ENCODE measurements at regions of chr22 and their contacts with region 1.

Region 1: GRCh38 chr22:32796865-32797573 is 4.5 kb upstream of the TIMP3 start:
- DNase-seq: no peak
- H3K4me3 ChIP-seq: no peak overlapping the region
- H3K27me3 ChIP-seq: no peaks in the 10 kb centered on the region
- CTCF ChIP-seq: peak; percentile 93

Region 2: GRCh38 chr22:32528984-32529982 is 267.7 kb before region 1 on chr22:
- CTCF ChIA-PET with region 1: interaction called, 266 read pairs
- POLR2A ChIA-PET with region 1: interaction called, 16 read pairs
- DNase-seq: no peak
- H3K4me3 ChIP-seq: no peak overlapping the region
- H3K27me3 ChIP-seq: no peaks in the 10 kb centered on the region
- CTCF ChIP-seq: peak; percentile 84

Region 3: DNA sequence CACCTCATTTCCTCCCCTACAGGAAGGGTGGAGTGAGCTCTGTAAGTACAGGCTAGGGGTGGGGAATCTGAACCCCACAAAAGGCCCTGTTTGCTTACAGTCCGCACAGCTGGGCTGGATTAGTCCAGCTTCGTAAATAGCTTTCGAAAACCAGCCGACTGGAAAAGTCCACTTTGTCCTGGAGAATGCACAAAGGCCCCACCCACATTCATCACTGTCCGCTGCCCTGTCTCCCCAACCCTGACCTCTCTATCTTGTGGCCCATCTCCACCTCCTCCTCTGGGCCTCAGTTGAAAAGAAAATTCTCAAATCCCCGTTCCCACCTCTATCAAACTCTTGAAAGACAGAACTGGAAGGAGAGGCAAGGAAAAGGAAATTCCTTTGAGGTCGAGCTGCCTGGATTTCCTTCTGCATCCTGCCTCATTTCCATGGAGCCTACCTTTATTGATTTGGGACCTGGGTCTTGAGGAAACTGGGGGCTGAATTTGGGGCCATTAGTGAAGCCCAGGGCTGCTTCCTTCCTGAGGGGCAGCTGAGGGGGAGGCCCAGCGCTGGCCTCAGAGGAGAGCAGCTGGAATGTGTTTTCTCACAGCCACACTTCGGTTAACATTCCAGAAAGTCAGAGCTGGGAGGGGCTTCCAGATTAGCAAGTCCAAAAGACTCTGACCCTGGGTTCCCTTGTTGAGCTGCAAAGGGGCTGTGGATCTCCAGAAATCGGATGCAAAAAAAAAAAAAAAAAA is 174.8 kb before region 1 on chr22:
- CTCF ChIA-PET with region 1: interaction called, 119 read pairs
- POLR2A ChIA-PET with region 1: interaction called, 15 read pairs
- DNase-seq: peak; percentile 81
- H3K4me3 ChIP-seq: peak overlapping the region; percentile 4; the same call in 1 of the 2 replicates
- H3K27me3 ChIP-seq: 0 out of 2 replicates have a peak, but pooled peaks cover 1% of the 10 kb centered on the region
- CTCF ChIP-seq: no peak

Region 4: GRCh38 chr22:32660292-32660691 is 136.7 kb before region 1 on chr22:
- CTCF ChIA-PET with region 1: interaction called, 224 read pairs
- POLR2A ChIA-PET with region 1: interaction called, 8 read pairs
- DNase-seq: no peak
- H3K4me3 ChIP-seq: no peak overlapping the region
- H3K27me3 ChIP-seq: no peaks in the 10 kb centered on the region
- CTCF ChIP-seq: peak; percentile 67

Region 5: DNA sequence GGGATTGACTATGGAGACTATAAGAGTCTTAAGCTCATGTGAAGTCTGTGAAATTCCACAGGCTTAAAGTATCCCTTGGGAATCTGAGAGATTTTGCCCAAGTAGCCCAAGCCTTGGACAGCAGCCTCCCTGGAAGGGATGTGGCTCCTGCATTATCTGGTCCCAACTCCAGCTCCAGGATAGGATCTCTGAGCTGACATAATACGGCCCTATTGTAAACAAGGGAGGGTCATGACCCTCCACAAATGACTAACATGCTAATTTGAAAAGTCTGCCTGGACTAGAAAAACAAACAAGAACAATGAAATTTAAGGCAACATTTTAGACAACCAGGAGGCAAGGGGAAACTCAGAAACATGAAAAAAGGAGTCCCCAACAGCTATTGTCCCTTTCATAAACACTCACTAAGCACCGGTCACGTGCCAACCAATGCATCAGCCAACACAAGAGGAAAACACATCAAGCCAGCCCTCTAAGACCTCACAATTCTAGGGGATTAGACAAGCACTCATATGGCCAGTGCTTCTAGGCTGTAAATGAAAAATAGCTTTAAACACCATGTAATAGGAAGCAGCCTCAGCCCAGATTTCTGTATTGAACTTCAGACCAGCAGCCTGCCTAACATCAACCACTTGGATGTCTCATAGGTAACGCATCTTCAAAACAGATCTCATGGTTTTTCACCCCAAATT is 96.7 kb before region 1 on chr22:
- CTCF ChIA-PET with region 1: interaction called, 15 read pairs
- POLR2A ChIA-PET with region 1: no interaction called
- DNase-seq: no peak
- H3K4me3 ChIP-seq: no peak overlapping the region
- H3K27me3 ChIP-seq: no peaks in the 10 kb centered on the region
- CTCF ChIP-seq: no peak

Region 6: DNA sequence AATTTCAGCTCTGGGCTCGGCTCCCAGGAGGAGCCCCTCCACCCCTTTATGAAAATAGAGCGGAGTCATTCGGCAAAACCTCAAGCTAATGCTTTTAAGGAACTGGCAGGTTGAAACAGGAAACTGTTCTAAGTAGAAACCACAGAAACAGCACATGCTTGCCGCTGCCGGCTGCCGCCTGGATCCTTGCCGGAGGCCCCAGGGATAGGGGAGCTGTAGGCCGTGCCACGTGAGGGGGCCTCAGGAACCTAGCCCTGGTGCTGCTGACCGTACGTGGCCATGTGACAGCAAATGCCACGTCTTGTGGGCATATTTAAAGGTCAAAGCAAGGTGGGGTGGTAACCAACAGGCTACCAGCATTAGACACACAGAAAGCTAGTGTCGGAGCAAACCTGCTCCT is 73.4 kb before region 1 on chr22:
- CTCF ChIA-PET with region 1: interaction called, 24 read pairs
- POLR2A ChIA-PET with region 1: no interaction called
- DNase-seq: peak; percentile 77
- H3K4me3 ChIP-seq: no peak overlapping the region
- H3K27me3 ChIP-seq: no peaks in the 10 kb centered on the region
- CTCF ChIP-seq: no peak

Region 7: DNA sequence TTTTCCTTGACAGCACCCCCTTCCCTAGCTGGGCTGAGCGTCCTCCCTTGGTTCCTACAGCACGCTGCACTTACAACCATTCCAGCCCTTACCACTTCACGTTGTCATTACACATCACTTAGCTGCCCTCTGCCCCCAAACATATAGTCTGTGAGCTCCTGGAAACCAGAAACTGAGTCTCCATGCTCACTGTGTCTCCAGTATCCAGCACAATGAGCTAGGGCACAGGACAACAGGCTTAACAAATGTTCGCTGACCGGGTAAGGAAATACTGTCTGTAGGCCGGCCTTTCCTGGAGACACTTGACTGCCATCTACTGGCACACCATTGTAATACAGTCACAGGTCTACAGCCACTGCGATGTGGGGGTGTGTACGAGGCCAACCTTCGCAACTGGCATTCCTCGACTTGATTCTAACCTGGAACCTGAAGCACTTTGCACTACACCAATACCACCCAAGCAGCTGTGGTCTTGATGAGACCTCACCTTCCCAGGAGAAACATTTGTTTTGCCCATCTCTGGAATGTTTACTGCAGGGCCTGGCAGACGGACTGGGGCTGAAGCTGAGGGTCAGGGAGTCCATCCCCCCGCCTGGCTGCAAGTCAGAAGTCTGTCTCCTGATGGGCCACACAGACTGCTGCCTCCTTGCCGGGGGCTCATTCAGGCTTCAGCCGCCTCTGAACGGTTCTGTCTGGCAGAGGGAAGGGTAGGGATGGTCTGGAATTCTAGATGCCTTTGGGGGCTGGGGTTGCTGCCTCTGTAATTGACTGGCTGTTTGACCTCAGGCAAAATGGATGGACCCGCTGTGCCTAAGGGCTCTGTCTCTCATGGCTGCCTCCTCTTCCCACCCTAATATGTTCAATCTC is 189.1 kb after region 1 on chr22:
- CTCF ChIA-PET with region 1: interaction called, 12 read pairs
- POLR2A ChIA-PET with region 1: no interaction called
- DNase-seq: no peak
- H3K4me3 ChIP-seq: no peak overlapping the region
- H3K27me3 ChIP-seq: 0 out of 2 replicates have a peak, but pooled peaks cover 3% of the 10 kb centered on the region
- CTCF ChIP-seq: peak; percentile 85

Measured in BJ (cell line).